Activated CD4-positive, alpha-beta T cell treated with anti-CD3 and anti-CD28 coated beads for 36 hours (primary cell): ENCODE measurements at regions of chr2 and their contacts with region 1.

Region 1: DNA sequence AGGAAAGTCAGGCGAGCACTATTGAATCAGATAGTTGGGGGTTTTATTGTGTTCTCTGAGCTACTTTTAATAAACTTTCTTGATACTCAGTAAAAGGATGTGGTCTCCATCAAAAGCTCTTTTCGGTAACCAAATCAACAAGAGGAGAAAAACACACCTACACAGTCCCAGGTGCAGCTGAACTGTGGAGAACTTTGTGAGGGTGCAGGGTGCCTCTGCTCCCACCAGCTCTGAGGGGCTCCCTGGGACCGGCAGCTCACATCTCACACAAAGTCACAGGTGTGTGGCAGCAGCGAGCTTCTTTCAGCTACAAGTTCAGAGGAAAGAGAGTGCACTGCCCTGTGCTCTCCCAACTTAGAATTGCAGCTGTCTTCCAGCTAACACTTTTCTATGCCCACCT is 650.4 kb downstream of the RNF144A start:
- DNase-seq: peak; percentile 81
- ATAC-seq: peak; percentile 93
- H3K4me3 Mint-ChIP-seq: peak overlapping the region; percentile 9
- H3K27ac Mint-ChIP-seq: peak overlapping the region; percentile 88
- H3K4me1 Mint-ChIP-seq: peaks cover 55% of the 10 kb centered on the region
- H3K27me3 Mint-ChIP-seq: no peaks in the 10 kb centered on the region

Region 2: DNA sequence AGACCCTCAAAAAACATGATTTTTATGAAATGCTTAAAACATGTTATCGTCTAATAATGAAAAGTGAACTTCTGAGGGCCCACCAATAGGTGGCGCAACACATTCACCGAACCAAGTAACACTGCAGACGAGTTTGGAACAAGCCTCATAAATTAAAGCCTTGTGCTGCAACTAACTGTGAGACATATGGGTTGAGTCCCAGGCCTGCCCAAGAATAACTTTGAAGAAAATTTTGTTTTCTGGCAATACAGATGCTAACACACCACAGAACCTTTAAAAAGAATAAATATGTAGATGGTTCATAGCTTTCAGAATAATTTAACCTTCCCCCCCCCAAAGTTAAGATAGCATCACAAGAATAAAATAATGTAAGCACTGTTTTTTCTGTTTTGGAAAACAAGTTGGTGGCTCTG is 364.6 kb before region 1 on chr2:
- CTCF ChIA-PET with region 1: no interaction called
- POLR2A ChIA-PET with region 1: no interaction called
- intact Hi-C with region 1: loop called in 1 of 2 experiments (anchors 10 kb)
- DNase-seq: peak; percentile 78
- ATAC-seq: peak; percentile 55
- H3K4me3 Mint-ChIP-seq: no peak overlapping the region
- H3K27ac Mint-ChIP-seq: no peak overlapping the region
- H3K4me1 Mint-ChIP-seq: peaks cover 1% of the 10 kb centered on the region
- H3K27me3 Mint-ChIP-seq: no peaks in the 10 kb centered on the region

Region 3: DNA sequence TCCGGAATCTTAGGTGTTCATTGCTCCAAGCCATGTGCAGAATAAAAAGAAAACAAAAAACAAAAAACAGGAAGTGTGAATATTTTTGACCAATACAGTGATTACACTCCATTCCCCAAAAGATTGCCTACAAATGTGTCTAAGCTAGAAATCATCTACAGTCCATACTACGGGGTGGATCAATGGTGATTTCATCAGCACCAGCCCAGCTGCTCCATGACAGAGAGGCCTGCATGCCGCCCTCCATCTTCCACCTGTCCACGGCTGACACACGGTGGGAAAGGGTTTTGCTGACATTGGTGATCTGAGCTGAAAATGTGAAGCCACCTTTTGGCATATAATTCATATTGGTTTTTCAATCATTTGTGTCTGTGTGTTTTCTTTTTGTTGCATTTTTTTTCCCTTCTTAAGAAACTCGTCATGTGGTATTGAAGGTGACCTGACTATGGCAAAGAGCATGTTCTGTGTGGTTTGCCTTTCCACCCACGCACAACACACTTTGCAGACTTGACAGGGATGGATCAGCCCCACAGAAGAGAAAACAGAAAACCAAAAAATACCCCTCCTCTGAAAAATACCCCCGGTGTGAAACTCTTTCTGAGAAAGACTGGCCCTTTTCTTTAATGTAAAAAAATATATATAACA is 117.3 kb before region 1 on chr2:
- CTCF ChIA-PET with region 1: no interaction called
- POLR2A ChIA-PET with region 1: interaction called, 7 read pairs
- intact Hi-C with region 1: loop called in 1 of 2 experiments (anchors 5 kb)
- DNase-seq: peak; percentile 83
- ATAC-seq: peak; percentile 84
- H3K4me3 Mint-ChIP-seq: peak overlapping the region; percentile 36
- H3K27ac Mint-ChIP-seq: peak overlapping the region; percentile 89
- H3K4me1 Mint-ChIP-seq: peaks cover 74% of the 10 kb centered on the region
- H3K27me3 Mint-ChIP-seq: no peaks in the 10 kb centered on the region

Region 4: GRCh38 chr2:7523481-7524120 is 44.0 kb before region 1 on chr2:
- CTCF ChIA-PET with region 1: no interaction called
- POLR2A ChIA-PET with region 1: interaction called, 3 read pairs
- intact Hi-C with region 1: loop called in 1 of 2 experiments (anchors 5 kb)
- DNase-seq: peak; percentile 27
- ATAC-seq: peak; percentile 51
- H3K4me3 Mint-ChIP-seq: peak overlapping the region; percentile 46
- H3K27ac Mint-ChIP-seq: peak overlapping the region; percentile 92
- H3K4me1 Mint-ChIP-seq: peaks cover 57% of the 10 kb centered on the region
- H3K27me3 Mint-ChIP-seq: no peaks in the 10 kb centered on the region

Region 5: GRCh38 chr2:7588295-7588694 is 20.6 kb after region 1 on chr2:
- CTCF ChIA-PET with region 1: interaction called, 4 read pairs
- POLR2A ChIA-PET with region 1: no interaction called
- intact Hi-C with region 1: loop called in 1 of 2 experiments (anchors 2 kb)
- DNase-seq: no peak
- ATAC-seq: peak; percentile 71
- H3K4me3 Mint-ChIP-seq: no peak overlapping the region
- H3K27ac Mint-ChIP-seq: peak overlapping the region; percentile 71
- H3K4me1 Mint-ChIP-seq: peaks cover 41% of the 10 kb centered on the region
- H3K27me3 Mint-ChIP-seq: no peaks in the 10 kb centered on the region

Region 6: DNA sequence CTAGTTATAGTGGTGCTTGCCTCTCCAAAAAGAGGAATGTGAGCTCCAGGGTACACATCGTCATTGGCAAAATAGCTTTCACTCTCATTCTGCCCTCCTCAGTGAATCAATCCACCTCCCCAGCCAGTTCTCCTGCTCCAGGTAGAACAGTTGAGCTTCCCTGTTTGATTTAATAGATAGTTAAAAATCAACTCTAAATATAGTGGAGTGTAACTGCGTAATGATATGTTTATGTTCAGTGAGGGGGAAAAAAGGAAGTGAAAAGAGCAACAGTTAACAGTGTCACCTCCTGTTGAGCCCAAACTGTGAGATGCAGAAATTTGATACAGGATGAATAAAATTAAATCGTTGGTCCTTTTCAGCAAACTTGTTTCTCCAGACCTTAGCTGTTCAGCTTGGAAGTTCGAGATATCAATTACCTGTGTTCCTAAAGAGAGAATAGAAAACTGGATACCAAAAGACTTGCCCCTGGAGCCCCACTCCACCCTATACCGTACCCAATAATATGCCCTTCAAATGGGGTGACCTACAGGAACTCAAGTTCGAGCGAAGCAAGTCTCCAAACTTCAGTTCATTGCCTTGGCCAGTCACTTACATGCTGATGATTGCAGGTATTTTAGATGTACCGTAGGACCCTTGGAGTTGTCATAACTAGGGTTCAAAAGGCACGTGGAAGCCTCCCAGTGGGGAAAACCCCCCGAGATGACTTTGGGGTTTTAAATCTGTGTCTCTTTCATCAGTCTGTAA is 57.9 kb after region 1 on chr2:
- CTCF ChIA-PET with region 1: no interaction called
- POLR2A ChIA-PET with region 1: no interaction called
- intact Hi-C with region 1: no loop called
- DNase-seq: no peak
- ATAC-seq: no peak
- H3K4me3 Mint-ChIP-seq: no peak overlapping the region
- H3K27ac Mint-ChIP-seq: no peak overlapping the region
- H3K4me1 Mint-ChIP-seq: peaks cover 12% of the 10 kb centered on the region
- H3K27me3 Mint-ChIP-seq: no peaks in the 10 kb centered on the region

Region 7: DNA sequence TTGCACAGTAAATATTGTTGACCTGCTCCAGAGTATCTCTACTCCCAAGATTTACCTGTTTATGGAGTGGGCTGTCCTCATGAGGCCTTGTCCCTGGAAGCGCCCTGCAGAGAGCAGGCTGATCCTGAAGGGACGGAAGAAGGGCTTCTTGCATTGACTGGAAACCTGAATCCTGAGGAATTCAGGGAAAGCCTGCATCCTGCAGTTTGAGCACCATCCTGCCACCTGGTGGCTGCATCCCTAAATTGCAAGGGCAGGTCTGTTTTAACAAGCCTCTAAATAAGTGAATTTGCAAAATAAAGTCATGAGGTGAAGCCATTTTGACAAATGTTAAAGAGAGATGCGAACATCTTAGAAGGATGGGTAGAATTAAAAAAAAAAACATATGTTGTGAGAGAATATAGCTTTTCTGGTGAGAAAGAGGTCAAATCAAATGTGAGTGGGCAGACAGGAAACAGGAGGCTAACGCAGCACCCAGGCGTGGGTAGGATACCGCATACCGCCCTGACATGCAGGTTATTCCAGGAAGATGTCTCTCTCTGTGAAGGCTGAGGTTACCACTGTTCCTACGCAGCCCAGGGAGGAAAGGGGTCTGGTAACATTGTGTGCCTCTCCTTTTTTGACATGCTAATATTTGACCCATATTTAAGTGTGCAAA is 104.5 kb after region 1 on chr2:
- CTCF ChIA-PET with region 1: interaction called, 5 read pairs
- POLR2A ChIA-PET with region 1: no interaction called
- intact Hi-C with region 1: loop called (anchors 5 kb)
- DNase-seq: peak; percentile 80
- ATAC-seq: peak; percentile 76
- H3K4me3 Mint-ChIP-seq: peak overlapping the region; percentile 48
- H3K27ac Mint-ChIP-seq: peak overlapping the region; percentile 96
- H3K4me1 Mint-ChIP-seq: peaks cover 55% of the 10 kb centered on the region
- H3K27me3 Mint-ChIP-seq: no peaks in the 10 kb centered on the region

Region 8: DNA sequence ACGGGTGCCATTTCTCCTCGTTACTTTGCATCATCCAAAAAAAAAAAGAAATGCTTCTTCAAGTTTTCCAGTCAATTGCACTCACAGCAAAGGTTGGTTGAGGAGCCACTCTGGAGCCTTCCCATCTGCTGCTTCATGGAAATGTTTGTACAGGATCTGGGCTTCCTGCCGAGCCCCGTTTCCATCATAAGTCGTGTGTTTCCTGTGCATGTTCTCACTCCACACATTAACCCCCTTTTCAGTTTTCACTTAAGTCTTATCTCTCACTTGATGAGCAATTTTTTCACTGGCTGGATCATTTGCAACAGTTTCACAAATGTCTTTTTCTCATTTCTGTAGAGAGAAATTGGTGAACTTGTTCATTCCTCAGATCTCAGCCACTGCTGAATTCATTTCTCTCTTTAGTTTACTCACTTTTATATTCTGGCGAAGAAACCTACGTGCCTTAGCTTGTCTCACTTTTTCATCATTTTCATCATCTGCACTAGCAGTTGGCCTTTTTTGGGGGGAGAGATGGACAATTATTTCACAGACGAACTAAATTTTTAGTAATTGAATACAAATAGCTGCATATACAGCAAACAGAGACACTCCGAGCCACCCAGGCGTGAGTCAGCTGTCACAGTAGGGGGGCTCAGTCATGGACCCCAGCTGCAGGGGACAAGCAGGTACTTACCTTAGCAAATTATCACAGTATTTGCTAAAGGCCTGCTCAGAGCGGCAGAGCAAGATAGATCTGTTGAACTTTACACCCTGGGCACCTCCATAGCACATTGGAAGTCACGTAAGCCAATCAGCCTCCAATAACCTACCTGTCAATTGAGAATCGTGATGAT is 363.4 kb after region 1 on chr2:
- CTCF ChIA-PET with region 1: no interaction called
- POLR2A ChIA-PET with region 1: no interaction called
- intact Hi-C with region 1: loop called in 1 of 2 experiments (anchors 1 kb)
- DNase-seq: peak; percentile 56
- ATAC-seq: peak; percentile 80
- H3K4me3 Mint-ChIP-seq: peak overlapping the region; percentile 0
- H3K27ac Mint-ChIP-seq: peak overlapping the region; percentile 93
- H3K4me1 Mint-ChIP-seq: peaks cover 33% of the 10 kb centered on the region
- H3K27me3 Mint-ChIP-seq: no peaks in the 10 kb centered on the region